Left cardiac atrium (tissue), 4 donors: ENCODE measurements at regions of chr17 and their contacts with region 1.

Region 1: DNA sequence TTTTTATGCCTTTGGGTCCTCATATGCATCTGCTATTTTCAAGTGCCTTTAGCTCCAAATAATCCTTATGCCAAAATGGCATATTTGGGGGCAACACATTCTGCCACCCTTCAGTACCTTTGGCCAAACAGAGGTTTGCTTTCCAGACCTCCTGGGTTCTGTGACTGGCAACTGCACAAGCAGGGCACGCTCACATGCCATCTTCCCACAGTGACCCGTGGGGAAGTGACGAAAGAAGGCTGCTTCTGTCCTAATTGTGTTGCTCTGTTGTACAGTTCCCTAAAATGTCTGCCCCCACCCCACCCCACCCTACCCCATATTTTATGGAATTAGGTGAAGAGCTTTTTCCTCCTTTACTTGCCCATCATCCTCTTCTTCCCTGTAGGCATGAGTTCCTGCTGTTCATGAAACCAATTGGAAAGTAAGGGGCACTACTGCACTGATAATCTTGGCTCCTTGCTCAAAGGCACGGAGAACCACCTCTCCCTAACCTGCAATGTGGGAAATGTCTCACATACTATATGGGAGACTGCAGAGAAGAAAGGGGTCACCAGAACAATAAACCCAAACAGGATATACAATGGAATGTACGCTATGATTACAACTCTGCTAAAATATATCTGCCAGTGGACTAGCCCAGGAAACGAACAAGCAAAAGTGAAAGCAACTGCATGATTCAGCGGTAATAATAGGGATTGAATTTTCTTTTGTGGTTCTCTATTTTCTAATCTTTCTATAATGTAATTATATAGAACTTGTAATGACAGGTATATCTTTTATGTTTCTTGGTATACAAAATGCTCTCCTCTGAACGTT is 3.3 kb upstream of the SLFN12L start:
- DNase-seq: peak; percentile 45
- ATAC-seq: peak; percentile 58 to 72

Region 2: GRCh38 chr17:35170968-35171771 is 369.6 kb before region 1 on chr17:
- intact Hi-C with region 1: loop called (anchors 5 to 10 kb)
- DNase-seq: no peak
- ATAC-seq: no peak

Region 3: DNA sequence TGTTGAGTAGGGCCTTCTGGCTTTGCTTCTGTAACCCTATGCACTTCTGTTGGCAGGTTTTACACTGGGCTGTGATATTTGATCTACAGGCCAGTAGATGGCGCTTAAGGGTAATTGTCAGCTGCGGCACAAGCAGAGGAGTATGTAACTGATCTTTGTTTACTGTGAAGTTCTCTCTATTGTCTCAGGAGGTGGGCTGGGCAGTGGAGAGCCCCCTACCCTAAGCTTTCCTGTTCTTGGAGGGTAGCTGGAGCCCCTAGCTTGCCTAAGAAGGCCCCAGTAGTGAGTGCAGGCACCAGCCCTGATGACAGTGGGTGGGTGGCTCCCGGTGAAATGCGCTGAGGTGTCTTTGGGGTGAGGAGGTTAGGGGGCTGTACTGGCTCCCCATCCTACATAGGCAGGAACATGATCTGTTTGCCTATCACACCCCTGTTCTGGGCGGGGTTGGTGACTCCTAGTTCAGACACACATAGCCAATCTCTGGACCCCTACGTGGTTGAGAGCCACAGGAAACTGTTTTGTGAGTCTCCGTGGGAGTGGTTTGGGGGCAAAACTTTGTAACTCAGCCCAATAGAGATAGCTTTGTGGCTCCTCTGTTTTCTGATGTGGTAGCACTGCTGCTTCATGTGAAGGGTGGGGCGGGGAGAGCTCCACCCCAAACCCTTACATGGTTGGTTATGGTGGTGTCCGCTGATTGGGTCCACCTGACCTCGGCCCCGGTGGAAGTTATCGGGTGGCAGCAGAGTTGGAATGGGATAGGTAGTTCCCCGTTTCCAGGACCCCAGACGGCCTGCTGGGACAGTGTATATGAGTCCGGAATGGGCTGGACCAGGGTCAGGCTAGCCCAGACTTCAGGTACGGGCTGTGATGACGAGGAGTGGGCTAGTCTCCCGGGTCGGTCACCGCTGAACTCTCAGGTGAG is 227.7 kb before region 1 on chr17:
- intact Hi-C with region 1: loop called (anchors 1 to 5 kb)
- DNase-seq: peak; percentile 34
- ATAC-seq: peak; percentile 91

Region 4: GRCh38 chr17:35596530-35597233 is 55.9 kb after region 1 on chr17:
- intact Hi-C with region 1: no loop called
- DNase-seq: no peak
- ATAC-seq: no peak